IMR-90 (cell line): ENCODE measurements at regions of chr7 and their contacts with region 1.

Region 1: GRCh38 chr7:152145853-152146466 is 120.5 kb downstream of the GALNT11 start:
- DNase-seq: peak; percentile 71
- ATAC-seq: peak; percentile 87
- H3K4me3 ChIP-seq: no peak overlapping the region
- H3K27ac ChIP-seq: no peak overlapping the region
- H3K4me1 ChIP-seq: peaks cover 2% of the 10 kb centered on the region; the same call in 1 of the 2 replicates
- H3K27me3 ChIP-seq: no peaks in the 10 kb centered on the region
- CTCF ChIP-seq: peak; percentile 55
- POLR2A ChIP-seq: no peak
- RAD21 ChIP-seq: peak; percentile 54

Region 2: GRCh38 chr7:151782598-151783448 is 363.1 kb before region 1 on chr7:
- CTCF ChIA-PET with region 1: no interaction called
- POLR2A ChIA-PET with region 1: no interaction called
- dilution Hi-C with region 1: no loop called
- in situ Hi-C with region 1: no loop called
- intact Hi-C with region 1: loop called (anchors 1 kb)
- DNase-seq: peak; percentile 34
- ATAC-seq: peak; percentile 96
- H3K4me3 ChIP-seq: peak overlapping the region; percentile 17; the same call in 1 of the 2 replicates
- H3K27ac ChIP-seq: no peak overlapping the region
- H3K4me1 ChIP-seq: no peaks in the 10 kb centered on the region
- H3K27me3 ChIP-seq: peaks cover 40% of the 10 kb centered on the region
- CTCF ChIP-seq: peak; percentile 91
- POLR2A ChIP-seq: no peak
- RAD21 ChIP-seq: peak; percentile 65

Region 3: GRCh38 chr7:152025077-152025936 is 120.7 kb before region 1 on chr7 and contains the start of gene GALNT11:
- CTCF ChIA-PET with region 1: interaction called, 9 read pairs
- POLR2A ChIA-PET with region 1: no interaction called
- dilution Hi-C with region 1: no loop called
- in situ Hi-C with region 1: no loop called
- intact Hi-C with region 1: loop called (anchors 5 kb)
- DNase-seq: peak; percentile 79
- ATAC-seq: peak; percentile 99
- H3K4me3 ChIP-seq: peak within 1 kb of the TSS; percentile 88
- H3K27ac ChIP-seq: peak within 1 kb of the TSS; percentile 66
- H3K4me1 ChIP-seq: peaks cover 5% of the 10 kb centered on the region
- H3K27me3 ChIP-seq: peaks cover 5% of the 10 kb centered on the region
- CTCF ChIP-seq: peak; percentile 43
- POLR2A ChIP-seq: peak; percentile 76
- RAD21 ChIP-seq: 0 out of 2 replicates have a peak, but pooled peaks have one; percentile 7
- total RNA-seq, gene GALNT11: 24.4 and 31.9 TPM in 2 replicates